A673 (cell line): ENCODE measurements at regions of chr11 and their contacts with region 1.

Region 1: DNA sequence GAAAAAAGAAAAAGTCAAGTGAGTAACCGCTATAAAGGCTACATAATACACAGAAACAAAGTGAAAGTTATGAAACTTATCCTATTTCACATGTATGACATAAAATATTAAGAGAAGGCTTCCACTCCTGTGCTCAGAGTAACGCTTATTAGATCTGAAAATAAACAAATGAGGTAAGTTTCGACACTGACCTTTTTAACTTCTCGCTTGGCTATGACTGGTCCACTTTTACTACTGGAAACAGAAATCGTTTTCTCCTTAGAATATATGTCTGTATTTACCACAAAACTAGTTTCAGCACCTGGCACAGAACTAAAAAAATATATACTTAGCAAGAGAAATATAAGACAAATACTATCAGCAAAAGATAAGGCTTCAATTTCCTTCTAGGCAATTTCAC is 16.4 kb downstream of the FNBP4 start:
- DNase-seq: no peak
- H3K4me3 ChIP-seq: no peak overlapping the region
- H3K27ac ChIP-seq: no peak overlapping the region
- H3K4me1 ChIP-seq: no peaks in the 10 kb centered on the region
- H3K27me3 ChIP-seq: no peaks in the 10 kb centered on the region
- CTCF ChIP-seq: no peak

Region 2: GRCh38 chr11:46936138-46937110 is 814.3 kb before region 1 on chr11 and contains the start of gene CSTPP1:
- CTCF ChIA-PET with region 1: no interaction called
- POLR2A ChIA-PET with region 1: no interaction called
- intact Hi-C with region 1: no loop called
- DNase-seq: peak; percentile 100
- H3K4me3 ChIP-seq: peak within 1 kb of the TSS; percentile 64
- H3K27ac ChIP-seq: peak within 1 kb of the TSS; percentile 1
- H3K4me1 ChIP-seq: no peaks in the 10 kb centered on the region
- H3K27me3 ChIP-seq: no peaks in the 10 kb centered on the region
- CTCF ChIP-seq: no peak
- total RNA-seq, gene CSTPP1: 79.3 and 89.7 TPM in 2 replicates

Region 3: DNA sequence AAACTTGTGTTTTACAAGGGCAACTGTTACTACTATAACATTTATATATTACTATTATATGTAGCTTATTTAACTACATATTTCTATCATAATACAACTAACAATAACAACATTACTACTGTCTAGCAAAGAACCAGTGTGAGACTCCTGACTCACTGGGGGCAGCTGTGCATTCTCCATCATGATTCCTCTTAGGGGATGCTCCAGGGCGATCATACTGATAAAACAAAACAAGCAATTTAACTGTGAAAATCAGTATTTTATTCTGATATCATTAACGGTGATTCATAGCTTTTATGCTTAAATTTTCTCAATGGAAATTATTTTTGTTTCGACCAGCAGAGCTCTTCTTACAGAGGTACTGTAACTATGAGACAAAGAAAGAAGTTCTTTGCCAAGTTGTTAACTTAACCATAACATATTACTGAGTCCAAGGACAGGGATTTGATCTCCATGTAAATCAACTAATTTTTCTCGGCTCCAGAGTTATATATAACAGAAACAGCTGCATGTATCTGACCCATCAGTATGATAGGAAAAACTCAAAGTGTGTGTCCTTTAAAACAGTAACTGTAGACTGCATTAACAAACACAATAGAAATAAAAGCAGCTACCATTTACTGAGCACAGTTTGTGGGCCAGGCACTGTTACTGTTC is 41.2 kb after region 1 on chr11:
- CTCF ChIA-PET with region 1: no interaction called
- POLR2A ChIA-PET with region 1: no interaction called
- intact Hi-C with region 1: loop called (anchors 5 kb)
- DNase-seq: no peak
- H3K4me3 ChIP-seq: no peak overlapping the region
- H3K27ac ChIP-seq: peak overlapping the region; percentile 0
- H3K4me1 ChIP-seq: peaks cover 11% of the 10 kb centered on the region
- H3K27me3 ChIP-seq: no peaks in the 10 kb centered on the region
- CTCF ChIP-seq: no peak

Region 4: DNA sequence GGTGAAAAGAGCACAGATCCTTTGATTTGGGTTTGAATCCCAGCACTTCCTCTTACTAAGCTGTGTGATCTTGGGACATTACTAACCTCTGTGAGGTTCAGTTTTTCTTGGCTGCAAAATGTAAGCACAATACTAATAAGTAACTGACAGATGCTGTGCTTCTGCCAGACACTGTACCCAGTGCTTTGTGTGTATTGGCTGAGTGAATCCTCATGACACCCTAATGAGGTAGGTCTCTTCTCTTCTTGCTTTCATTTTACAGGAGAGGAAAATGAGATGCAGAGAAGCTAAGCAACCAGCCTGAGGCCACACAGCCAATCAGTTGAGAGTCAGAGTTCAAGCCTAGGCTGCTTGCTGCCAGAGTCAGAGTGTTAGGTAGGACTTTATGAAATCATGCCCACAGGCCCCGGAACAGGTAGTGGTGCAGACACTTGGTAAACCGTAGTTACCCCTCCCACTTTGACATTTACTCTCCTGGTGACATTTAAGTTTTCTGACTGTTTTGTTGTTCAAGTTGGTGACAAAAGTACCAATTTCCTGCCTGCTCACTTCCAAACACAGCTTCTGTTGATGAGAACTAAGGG is 250.8 kb after region 1 on chr11:
- CTCF ChIA-PET with region 1: no interaction called
- POLR2A ChIA-PET with region 1: no interaction called
- intact Hi-C with region 1: no loop called
- DNase-seq: no peak
- H3K4me3 ChIP-seq: no peak overlapping the region
- H3K27ac ChIP-seq: no peak overlapping the region
- H3K4me1 ChIP-seq: no peaks in the 10 kb centered on the region
- H3K27me3 ChIP-seq: no peaks in the 10 kb centered on the region
- CTCF ChIP-seq: no peak